ENCODE measurements at regions of chr4 and their contacts with region 1.

Region 1: DNA sequence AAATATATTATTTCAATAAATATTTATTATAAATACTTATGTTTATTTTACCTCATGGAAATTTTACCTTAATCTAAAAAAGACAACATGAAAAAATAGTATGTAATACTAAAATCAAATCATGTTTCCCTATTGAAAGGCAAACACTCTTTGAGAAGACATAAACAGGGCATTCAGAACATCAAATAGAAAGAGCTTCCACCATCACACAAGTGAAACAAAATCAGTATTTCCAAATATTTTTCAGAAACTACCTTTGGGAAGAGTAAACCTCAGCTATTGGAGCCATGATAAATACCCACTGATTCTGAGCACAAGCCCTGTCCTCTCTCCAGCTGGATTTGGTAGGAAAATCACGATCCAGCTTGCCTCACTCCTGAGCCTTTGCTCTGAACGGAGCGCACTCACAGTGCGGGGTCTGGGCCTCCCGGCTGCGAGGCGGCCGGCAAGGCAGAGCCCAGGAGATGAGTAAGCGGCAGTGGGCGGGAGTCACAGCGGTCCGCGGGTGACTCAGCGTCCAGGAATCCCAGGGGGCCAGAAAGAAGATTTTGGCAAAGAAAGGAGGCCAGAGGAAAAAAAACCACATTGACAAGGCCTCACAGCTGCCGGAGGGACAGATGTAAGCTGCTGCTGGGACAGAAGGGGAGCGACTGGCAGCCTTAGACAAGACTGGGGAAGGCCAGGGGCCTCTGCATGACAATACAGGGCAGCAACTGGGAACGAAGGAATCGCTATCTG is 14.7 kb upstream of the ANXA5 start:
- DNase-seq: peak; percentile 63 to 77
- ATAC-seq: peak; percentile 87 to 89
- H3K4me3 ChIP-seq: peak overlapping the region; percentile 22 to 48 (median 28)
- H3K27ac ChIP-seq: peak overlapping the region; percentile 62 to 76 (median 64)
- H3K4me1 ChIP-seq: peaks cover 0 to 3% of the 10 kb centered on the region in 2 donors
- H3K27me3 ChIP-seq: no peaks in the 10 kb centered on the region
- CTCF ChIP-seq: no peak
- POLR2A ChIP-seq: peak in 1 of 2 donors; percentile 44

Region 2: DNA sequence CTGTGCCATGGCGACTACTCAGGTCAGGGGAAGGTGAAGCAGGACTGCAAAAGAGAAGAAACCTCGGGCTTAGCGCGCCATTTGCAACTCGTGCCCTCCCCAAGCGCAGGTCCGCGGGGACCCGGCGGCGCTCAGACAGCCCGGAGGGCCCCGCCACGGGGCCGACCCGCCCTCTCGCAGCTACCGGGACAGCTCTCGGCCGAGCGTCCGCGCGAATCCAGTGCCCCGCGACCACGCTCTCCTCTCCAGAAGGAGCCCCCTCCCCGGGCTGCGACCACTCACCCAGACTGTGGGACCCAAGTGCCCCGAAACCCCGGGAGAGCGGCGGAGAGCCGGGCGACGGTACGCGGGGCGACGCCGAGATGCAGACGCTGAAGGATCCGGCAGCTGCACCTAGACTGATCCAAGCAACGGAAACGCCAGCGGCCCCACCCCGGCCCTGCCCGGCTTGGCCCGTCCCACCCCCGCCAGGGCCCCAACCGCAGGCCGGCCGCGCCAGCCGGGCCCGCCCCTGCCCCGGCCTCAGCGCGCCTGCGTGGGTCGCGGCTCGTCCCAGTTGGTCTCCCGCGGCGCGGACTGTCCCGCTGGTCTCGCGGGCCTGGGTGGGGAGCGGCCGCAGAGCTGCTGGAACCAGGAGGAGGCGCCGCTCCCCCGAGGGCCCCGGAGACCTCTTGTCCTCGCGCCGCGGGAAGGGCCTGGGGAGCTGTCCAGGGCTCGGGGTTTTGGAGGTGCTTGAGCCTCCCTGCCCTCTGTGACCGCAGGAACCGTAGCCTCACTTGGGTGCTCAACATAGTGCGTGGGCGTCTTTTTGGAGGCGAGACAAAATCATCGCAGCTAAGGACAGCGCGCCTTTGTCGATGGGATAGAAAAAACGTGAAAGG is 14.6 kb before region 1 on chr4 and contains the start of gene ANXA5:
- in situ Hi-C with region 1: no loop called
- intact Hi-C with region 1: loop called (anchors 2 kb)
- DNase-seq: peak; percentile 70 to 84
- ATAC-seq: peak; percentile 88 to 90
- H3K4me3 ChIP-seq: peak within 1 kb of the TSS; percentile 85 to 98 (median 94)
- H3K27ac ChIP-seq: peak within 1 kb of the TSS; percentile 89 to 97 (median 94)
- H3K4me1 ChIP-seq: peaks cover 27 to 40% of the 10 kb centered on the region in 2 donors
- H3K27me3 ChIP-seq: no peaks in the 10 kb centered on the region
- CTCF ChIP-seq: peak in 4 of 5 experiments; percentile 31 to 54 (median 38)
- POLR2A ChIP-seq: peak; percentile 76 to 77
- total RNA-seq, gene ANXA5: 59.2 to 181 (median 88.0) TPM

Measured in gastrocnemius medialis (tissue), 4 donors.